Cardiac septum (tissue), 1 donor: ENCODE measurements at regions of chr12 and their contacts with region 1.

Region 1: DNA sequence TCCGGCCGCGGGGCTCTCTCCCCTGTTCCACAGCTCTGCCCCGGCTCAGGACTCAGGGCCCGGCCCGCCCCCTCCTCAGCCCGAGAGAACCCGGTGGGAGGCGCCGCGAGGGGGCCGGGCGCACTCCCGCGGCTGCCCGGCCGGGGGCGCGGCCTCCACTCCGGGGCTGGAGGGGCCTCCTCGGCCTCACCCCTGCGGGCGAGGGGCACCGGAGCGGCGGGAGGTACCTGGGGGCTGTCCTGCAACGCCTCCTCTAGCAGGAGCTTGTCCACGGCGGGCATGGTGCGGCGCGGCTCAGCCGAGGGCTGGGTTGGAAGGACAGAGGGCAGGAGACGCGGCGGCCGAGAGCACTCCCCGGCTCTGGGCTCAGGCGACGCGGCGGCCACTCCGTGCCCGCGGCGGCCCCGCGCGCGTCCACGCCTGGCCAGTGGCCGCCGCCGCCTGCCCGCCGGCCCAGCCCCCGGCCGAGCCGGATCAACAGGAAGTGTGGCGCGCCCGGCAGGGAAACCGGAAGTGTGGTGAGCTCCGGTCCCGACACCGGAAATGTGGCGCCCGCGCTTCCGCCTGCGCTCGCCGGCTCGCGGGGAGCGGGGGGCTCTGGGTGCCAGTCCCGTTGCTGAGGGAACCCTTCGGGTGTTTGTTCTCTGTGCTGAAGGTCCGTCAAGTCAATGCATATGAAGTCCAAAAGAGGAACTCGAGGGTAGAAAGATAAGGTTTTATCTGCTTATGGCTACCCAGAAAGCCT is at the start of gene APPL2:
- DNase-seq: peak; percentile 95
- total RNA-seq, gene APPL2: 15.6 TPM

Region 2: GRCh38 chr12:106090591-106091411 is 854.9 kb after region 1 on chr12:
- intact Hi-C with region 1: loop called (anchors 5 kb)
- DNase-seq: peak; percentile 85